GM10248 (cell line): ENCODE measurements at regions of chr1 and their contacts with region 1.

Region 1: GRCh38 chr1:52665006-52665941 is 32.3 kb downstream of the SHISAL2A start:
- DNase-seq: no peak
- CTCF ChIP-seq: no peak

Region 2: DNA sequence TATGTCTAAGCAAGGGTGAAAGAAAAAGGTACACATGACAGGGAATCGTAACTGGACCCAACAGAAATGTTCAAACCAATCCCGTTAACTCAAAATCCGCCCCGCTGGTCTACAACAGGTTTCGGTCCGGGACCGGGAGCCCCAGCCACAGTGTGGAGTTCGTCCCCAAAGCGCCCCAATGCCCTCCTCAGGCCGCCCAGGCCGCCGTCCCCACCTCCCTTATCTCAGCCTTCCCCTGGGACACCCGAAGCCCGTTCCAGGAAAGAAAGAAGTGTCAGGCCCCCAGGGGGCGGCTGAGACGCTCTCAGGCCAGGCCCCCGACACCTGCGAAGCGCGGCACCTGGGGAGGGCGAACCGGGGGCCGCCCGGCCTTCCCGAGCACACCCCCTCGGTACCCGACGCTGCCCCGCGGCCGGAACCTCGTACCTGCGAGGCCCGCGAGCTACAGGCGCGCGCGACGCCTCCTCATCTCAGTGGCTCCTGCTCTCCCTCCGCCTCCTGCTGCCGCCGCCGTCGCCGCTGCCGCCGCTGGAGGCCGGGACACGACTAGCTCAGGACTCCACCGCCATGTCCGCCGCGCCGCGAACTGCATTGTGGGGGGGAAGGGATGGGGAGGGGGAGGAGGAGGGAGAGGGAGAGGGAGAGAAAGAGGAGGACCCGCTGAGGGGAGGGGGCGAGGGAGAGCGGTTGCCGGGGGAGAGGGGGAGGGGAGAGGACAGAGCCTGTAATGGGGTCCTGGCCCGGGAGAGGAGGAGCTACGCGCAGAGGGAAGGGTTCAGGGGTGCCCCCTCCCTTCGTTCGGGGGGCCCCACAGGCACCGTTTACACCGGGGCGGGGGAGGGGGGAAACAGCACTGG is 112.5 kb before region 1 on chr1 and contains the start of gene TUT4:
- CTCF ChIA-PET with region 1: no interaction called
- POLR2A ChIA-PET with region 1: no interaction called
- DNase-seq: peak; percentile 72
- CTCF ChIP-seq: peak; percentile 19

Region 3: DNA sequence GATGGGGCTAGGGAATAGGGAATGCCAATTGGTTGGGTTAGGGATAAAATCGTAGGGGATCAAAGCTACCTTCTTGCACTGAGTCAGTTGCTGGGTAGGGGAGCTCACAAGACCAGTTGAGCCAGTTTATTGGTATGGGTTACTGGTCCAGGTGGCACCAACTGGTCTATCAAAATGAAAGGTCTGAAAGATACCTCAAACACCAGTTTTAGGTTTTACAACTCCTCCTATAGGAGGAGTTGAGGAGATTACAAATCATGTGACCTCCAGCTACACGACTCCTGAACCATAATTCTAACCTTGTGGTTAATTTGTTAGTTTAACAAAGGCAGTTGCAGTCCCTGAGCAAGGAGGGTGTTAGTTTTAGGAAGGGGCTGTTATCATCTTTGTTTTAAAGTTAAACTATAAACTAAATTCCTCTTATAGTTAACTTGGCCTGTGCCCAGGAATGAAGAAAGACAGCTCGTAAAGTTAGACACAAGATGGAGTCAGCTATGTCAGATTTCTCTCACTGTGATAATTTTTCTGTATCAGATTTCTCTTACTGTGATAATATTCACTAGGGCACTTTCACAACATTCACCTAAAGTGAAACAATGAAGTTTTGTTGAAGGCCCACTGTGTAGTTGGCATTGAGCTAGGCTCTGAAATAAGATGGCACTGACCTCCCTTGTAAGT is 29.7 kb before region 1 on chr1:
- CTCF ChIA-PET with region 1: interaction called, 4 read pairs
- POLR2A ChIA-PET with region 1: interaction called, 15 read pairs
- DNase-seq: no peak
- CTCF ChIP-seq: no peak

Region 4: DNA sequence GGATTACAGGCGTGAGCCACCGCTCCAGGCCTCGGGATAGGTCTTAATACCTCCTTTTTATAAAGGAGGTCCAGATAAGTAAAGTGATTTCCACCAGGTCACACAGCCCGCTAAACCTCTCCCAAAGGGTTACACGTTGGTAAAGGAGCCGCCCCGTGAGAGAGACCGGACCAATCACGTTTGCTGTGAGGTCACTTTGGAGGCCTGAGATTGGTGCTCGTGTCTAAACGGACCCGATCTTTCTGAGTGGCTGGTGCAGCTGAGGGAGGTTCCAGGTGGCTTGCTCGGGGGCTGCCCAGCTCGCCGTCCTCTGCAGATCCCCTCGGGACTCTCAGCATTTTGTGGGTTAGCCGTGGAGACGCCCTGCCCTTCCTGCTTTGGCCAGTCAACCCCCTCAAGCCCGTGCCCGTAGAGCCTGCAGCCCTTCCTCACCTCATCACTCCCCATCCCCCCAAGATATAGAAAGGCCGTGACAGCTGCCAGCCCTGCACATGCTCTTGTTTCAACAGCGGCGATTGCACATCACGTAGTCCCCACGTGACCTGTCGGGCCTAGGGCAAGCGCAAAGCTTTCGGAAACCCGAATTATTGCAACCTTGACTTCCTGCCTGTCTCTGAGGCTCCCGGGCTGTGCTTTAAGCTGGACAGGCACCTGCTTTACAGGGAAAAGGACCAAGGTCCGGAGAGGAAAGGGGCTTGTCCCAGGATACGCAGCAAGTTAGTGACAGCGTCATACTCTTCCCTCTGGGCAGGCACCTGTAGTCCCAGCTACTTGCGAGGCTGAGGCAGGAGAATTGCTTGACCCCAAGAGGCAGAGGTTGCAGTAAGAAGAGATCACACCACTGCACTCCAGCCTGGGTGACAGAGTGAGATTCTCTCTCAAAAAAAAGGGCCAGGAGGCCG is 37.9 kb after region 1 on chr1:
- CTCF ChIA-PET with region 1: no interaction called
- POLR2A ChIA-PET with region 1: no interaction called
- DNase-seq: peak; percentile 90
- CTCF ChIP-seq: no peak